PC-3 (cell line): ENCODE measurements at regions of chr11 and their contacts with region 1.

Region 1: GRCh38 chr11:31810779-31811647 is at the start of gene PAX6:
- DNase-seq: peak; percentile 74
- ATAC-seq: peak; percentile 39
- H3K4me3 ChIP-seq: peak within 1 kb of the TSS; percentile 93
- H3K27ac ChIP-seq: peak within 1 kb of the TSS; percentile 57
- H3K4me1 ChIP-seq: peaks cover 36% of the 10 kb centered on the region
- H3K27me3 ChIP-seq: no peaks in the 10 kb centered on the region
- CTCF ChIP-seq: no peak
- total RNA-seq, gene PAX6: 14.6 and 25.7 TPM in 2 replicates

Region 2: DNA sequence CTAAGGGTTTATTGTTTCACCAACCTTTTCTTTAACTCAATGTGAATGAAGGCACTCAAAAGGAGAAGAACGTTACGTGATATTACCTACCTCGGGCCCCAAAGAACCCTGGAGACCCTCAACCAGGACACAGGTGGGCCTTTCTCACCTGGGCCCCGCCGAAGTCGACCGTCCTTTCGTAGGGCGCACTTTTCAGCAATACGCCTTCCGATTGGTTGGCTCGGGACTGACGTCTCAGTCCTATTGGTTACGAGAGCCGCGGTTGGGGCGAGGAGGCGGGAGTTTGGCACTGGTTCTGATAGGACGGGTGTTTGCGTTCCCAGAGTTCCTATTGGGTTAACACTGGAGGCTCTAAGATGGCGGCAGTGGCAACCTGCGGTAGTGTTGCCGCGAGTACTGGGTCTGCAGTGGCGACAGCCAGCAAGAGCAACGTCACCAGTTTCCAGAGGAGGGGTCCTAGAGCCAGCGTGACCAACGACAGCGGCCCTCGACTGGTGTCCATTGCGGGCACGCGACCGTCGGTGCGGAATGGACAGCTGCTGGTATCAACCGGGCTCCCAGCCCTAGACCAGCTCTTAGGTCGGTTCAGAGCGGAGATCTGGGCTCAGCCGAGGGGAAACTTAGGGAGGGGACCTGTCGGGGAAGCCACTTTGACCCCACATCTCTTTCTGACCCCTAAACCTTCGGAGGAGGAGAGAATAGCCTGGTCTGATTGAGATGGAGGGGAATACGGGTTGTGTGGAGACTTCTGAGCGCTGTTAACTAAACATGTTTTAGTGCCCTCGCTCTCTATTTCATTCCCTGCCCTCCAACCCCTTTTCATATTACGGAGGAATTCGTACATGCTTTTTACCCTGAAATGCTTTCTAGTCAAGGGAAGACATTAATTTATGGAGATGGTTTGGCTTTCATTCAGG is 301.3 kb before region 1 on chr11 and contains the starts of genes ELP4 and IMMP1L:
- CTCF ChIA-PET with region 1: no interaction called
- POLR2A ChIA-PET with region 1: interaction called, 4 read pairs
- intact Hi-C with region 1: loop called (anchors 1 kb)
- DNase-seq: peak; percentile 97
- ATAC-seq: peak; percentile 96
- H3K4me3 ChIP-seq: peak within 1 kb of the TSS; percentile 96
- H3K27ac ChIP-seq: peak within 1 kb of the TSS; percentile 27; the same call in 1 of the 2 replicates
- H3K4me1 ChIP-seq: peaks cover 29% of the 10 kb centered on the region
- H3K27me3 ChIP-seq: no peaks in the 10 kb centered on the region
- CTCF ChIP-seq: no peak
- total RNA-seq, gene ELP4: 19.4 and 19.9 TPM in 2 replicates
- total RNA-seq, gene IMMP1L: 13.5 and 31.4 TPM in 2 replicates

Region 3: GRCh38 chr11:31699066-31699465 is 111.9 kb before region 1 on chr11:
- CTCF ChIA-PET with region 1: no interaction called
- POLR2A ChIA-PET with region 1: no interaction called
- intact Hi-C with region 1: no loop called
- DNase-seq: no peak
- ATAC-seq: no peak
- H3K4me3 ChIP-seq: no peak overlapping the region
- H3K27ac ChIP-seq: no peak overlapping the region
- H3K4me1 ChIP-seq: peaks cover 10% of the 10 kb centered on the region
- H3K27me3 ChIP-seq: no peaks in the 10 kb centered on the region
- CTCF ChIP-seq: no peak

Region 4: DNA sequence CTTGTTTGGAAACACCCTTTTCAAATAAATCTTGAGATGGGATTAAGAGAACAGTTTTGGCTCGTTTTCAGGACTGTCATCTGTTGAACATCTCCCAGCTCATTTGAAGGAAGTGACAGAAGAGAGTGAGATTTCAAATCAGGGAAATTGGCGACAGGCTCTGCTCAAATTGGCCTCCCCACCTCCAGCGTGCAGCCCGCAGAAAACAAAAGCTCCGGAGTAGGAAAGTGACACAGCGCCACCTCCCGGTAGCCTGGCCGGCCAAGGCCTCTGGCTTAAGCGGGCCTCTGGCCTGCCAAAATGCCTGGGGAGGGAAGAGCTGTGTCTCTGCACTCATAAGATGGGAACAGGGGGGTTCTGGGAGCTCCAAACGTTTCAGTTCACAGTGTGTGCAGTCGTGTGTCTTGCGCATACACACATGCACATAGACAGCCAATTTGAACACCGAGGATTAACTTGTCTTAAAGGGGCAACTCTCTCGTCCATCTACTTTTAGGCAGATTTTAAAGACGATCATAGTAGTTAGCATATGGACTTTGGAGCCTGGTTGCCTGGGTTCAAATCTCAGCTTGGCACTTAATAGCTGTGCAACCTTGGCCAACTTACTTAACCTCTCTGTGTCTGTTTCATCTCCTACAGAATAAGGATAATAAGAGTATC is 147.2 kb after region 1 on chr11:
- CTCF ChIA-PET with region 1: interaction called, 3 read pairs
- POLR2A ChIA-PET with region 1: no interaction called
- intact Hi-C with region 1: loop called (anchors 5 kb)
- DNase-seq: peak; percentile 77
- ATAC-seq: peak; percentile 61
- H3K4me3 ChIP-seq: no peak overlapping the region
- H3K27ac ChIP-seq: no peak overlapping the region
- H3K4me1 ChIP-seq: peaks cover 16% of the 10 kb centered on the region
- H3K27me3 ChIP-seq: no peaks in the 10 kb centered on the region
- CTCF ChIP-seq: peak; percentile 88

Region 5: GRCh38 chr11:32006799-32007388 is 195.9 kb after region 1 on chr11:
- CTCF ChIA-PET with region 1: no interaction called
- POLR2A ChIA-PET with region 1: no interaction called
- intact Hi-C with region 1: loop called (anchors 1 kb)
- DNase-seq: peak; percentile 71
- ATAC-seq: peak; percentile 55
- H3K4me3 ChIP-seq: no peak overlapping the region
- H3K27ac ChIP-seq: no peak overlapping the region
- H3K4me1 ChIP-seq: peaks cover 15% of the 10 kb centered on the region
- H3K27me3 ChIP-seq: peaks cover 40% of the 10 kb centered on the region
- CTCF ChIP-seq: peak; percentile 79